Left cardiac atrium (tissue), 4 donors: ENCODE measurements at regions of chr1 and their contacts with region 1.

Region 1: GRCh38 chr1:4652631-4653327 is 1.6 kb upstream of the AJAP1 start:
- DNase-seq: peak; percentile 57
- ATAC-seq: peak; percentile 73 to 82

Region 2: GRCh38 chr1:3910857-3911845 is 741.6 kb before region 1 on chr1:
- intact Hi-C with region 1: loop called in 1 of 2 experiments (anchors 10 kb)
- DNase-seq: peak; percentile 68
- ATAC-seq: peak; percentile 72 to 85

Region 3: GRCh38 chr1:5620990-5621389 is 968.2 kb after region 1 on chr1:
- intact Hi-C with region 1: loop called in 1 of 2 experiments (anchors 5 kb)
- DNase-seq: no peak
- ATAC-seq: peak in 1 of 2 donors; percentile 83

Region 4: GRCh38 chr1:5745776-5746610 is 1093.2 kb after region 1 on chr1:
- intact Hi-C with region 1: loop called in 1 of 2 experiments (anchors 10 kb)
- DNase-seq: peak; percentile 72
- ATAC-seq: peak; percentile 82 to 86

Region 5: DNA sequence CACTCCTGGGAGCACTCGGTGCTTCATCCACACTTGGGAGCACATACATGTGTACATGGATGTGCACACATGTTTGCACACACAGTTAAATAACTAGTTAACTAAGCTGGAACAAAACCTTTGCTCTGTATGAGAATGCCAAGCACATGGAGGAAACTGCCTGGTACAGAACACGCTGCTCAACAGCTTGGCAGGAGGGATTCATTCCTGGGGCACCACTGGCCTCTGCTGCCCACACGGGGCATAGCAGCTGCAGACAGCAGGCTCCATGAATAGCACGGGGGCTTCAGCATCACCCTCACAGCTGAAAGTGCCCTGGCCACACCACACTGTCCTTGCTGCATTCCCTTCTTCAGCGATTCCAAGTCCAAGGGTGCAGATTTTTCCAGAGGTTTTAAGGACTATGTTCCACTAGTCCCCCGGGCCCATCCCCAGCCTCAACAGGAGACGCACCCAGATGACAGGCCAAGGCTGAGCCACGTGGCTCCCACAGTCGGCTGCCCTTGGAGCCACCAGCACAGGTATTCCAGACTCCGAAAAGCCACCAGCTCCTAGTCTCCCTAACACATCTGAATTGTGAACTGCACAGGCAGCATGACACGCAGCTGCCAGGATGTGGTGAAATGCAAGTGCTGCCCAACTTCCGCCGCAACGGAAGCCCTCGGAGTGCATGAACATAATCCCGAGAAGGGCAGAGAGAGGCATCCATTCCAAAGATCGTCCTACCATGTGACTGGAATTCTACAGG is 1322.5 kb after region 1 on chr1:
- intact Hi-C with region 1: loop called in 1 of 2 experiments (anchors 10 kb)
- DNase-seq: no peak
- ATAC-seq: peak; percentile 78 to 92